ENCODE measurements at regions of chr18 and their contacts with region 1.

Region 1: DNA sequence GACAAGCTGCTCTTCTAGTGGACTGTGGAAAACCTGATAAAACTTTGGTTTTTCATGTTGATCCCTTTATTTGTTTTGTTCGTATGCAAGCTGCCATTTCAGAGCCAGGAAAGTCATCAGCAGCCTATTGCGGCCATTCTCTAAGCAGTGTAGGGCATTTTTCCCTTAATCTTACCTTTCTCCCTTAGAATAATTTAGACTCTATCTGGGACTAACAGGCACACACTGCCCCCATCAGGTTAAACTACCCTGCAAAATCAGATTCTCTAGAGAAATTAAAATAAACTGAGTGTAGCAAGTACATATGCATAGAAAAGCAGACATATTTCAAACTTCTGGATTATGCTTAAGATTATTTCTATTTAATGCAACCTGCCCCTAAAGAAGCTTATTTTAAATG is 347.5 kb downstream of the METTL4 start:
- DNase-seq: peak; percentile 50
- H3K4me3 ChIP-seq: peak overlapping the region; percentile 35 to 50 (median 48)
- H3K27ac ChIP-seq: no peak overlapping the region
- H3K4me1 ChIP-seq: peaks cover 5% of the 10 kb centered on the region
- H3K27me3 ChIP-seq: no peaks in the 10 kb centered on the region
- CTCF ChIP-seq: peak; percentile 67 to 71

Region 2: DNA sequence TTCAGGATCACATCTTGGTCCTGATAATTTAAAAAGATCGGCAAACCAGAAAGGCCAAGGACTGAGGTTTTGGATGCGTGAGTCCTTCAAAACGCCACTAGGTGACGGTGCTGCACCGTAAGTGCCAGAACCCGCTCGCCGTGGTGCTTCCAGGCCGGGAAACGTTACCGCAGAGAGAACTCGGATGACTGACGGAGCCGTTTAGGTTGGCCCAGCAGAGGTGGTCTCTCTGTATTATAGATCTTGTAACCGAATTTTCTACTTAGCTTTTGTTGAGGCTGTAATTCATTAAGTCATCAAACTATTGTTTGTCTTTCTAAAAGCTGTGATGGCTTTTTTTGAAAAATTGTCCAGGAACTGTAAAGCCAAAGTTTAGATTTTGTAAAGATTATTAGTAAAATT is 1359.0 kb before region 1 on chr18:
- CTCF ChIA-PET with region 1: no interaction called
- dilution Hi-C with region 1: no loop called
- in situ Hi-C with region 1: loop called in 1 of 2 experiments (anchors 25 kb)
- intact Hi-C with region 1: no loop called
- DNase-seq: peak; percentile 43
- H3K4me3 ChIP-seq: no peak overlapping the region
- H3K27ac ChIP-seq: no peak overlapping the region
- H3K4me1 ChIP-seq: peaks cover 12% of the 10 kb centered on the region
- H3K27me3 ChIP-seq: peaks cover 3% of the 10 kb centered on the region
- CTCF ChIP-seq: peak; percentile 98 to 100

Region 3: DNA sequence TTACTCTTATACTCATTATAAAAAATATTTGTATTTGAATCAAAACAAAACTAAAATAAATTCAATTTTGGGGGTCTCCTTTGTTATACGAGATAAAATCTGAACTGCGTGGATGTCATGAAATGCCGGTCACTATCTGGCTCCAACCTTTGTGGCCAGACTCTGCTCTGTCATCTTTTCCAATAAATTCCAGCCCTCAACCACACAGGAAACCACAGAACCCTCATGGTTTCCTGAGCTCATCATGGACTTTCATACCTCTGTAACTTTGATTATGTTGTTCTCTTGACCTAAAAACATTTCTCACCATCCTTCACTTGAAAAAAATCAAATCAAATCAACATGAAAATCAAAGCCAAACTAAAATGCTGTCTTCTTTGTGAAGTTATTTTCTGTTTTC is 377.2 kb before region 1 on chr18:
- CTCF ChIA-PET with region 1: no interaction called
- dilution Hi-C with region 1: no loop called
- in situ Hi-C with region 1: no loop called
- intact Hi-C with region 1: loop called (anchors 10 kb)
- DNase-seq: peak; percentile 64
- H3K4me3 ChIP-seq: no peak overlapping the region
- H3K27ac ChIP-seq: no peak overlapping the region
- H3K4me1 ChIP-seq: peaks cover 3% of the 10 kb centered on the region
- H3K27me3 ChIP-seq: no peaks in the 10 kb centered on the region
- CTCF ChIP-seq: no peak

Region 4: DNA sequence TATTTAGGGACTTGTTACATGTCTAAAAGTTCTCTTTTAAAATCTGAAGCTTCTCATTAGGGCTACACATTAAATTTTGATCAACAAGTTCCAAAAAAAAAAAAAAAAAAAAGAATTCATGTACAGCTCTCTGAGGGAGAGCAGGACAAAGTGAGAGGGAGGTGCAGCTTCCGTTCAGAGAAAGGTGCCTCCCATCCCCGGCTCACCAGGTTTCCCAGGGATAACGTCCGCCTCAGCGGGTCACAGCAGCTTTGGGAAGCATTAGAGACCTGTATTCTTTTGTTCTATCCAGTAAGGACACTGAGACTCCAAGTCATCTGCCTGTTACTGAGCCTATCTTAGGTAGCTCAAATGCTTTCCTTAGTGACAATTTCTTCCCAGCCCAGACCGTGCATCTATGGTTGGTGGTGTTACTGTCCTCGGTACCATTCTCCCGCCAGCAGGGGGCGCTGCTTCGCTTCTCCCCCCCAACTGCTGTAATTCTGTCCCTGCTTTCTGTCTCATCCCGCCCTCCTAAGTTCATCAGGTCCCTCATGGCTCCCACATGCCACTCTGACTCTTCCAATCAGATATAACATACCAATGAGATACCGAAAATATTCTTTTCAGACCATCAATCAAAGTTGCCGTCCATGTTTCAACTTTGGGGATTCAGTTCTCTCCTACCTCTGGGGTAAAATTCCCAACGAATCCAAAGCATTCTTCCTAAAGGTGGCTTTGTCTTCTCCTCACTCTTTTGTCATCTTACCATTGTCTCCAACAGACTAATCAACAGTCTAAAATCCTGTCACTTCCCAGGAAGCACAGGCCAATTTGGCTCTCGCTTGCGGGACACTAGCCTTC is 119.0 kb before region 1 on chr18:
- CTCF ChIA-PET with region 1: interaction called, 16 read pairs
- dilution Hi-C with region 1: no loop called
- in situ Hi-C with region 1: loop called (anchors 10 to 25 kb)
- intact Hi-C with region 1: loop called (anchors 1 kb)
- DNase-seq: peak; percentile 29
- H3K4me3 ChIP-seq: no peak overlapping the region
- H3K27ac ChIP-seq: no peak overlapping the region
- H3K4me1 ChIP-seq: no peaks in the 10 kb centered on the region
- H3K27me3 ChIP-seq: no peaks in the 10 kb centered on the region
- CTCF ChIP-seq: peak; percentile 83 to 90

Region 5: GRCh38 chr18:2312440-2312839 is 88.6 kb after region 1 on chr18:
- CTCF ChIA-PET with region 1: no interaction called
- dilution Hi-C with region 1: no loop called
- in situ Hi-C with region 1: no loop called
- intact Hi-C with region 1: no loop called
- DNase-seq: no peak
- H3K4me3 ChIP-seq: no peak overlapping the region
- H3K27ac ChIP-seq: no peak overlapping the region
- H3K4me1 ChIP-seq: no peaks in the 10 kb centered on the region
- H3K27me3 ChIP-seq: no peaks in the 10 kb centered on the region
- CTCF ChIP-seq: no peak

Region 6: DNA sequence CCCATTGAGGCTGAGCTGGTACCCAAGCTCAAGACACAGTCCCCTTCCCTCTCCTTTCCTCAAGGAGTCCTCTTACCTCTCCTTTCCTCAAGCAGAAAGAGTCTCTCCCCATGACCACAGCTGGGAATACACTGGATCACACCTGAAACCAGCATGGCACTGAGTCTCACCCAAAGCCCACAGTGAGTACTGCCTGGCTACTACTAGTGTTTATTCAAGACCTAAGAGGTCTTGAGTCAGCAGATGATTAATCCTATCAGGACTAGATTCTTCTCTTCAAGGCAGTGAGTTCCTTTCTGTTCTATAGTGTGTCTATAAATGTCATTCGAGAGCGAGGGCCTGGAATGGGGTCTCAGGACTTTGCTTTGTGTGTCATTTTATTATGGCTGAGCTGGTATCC is 236.0 kb after region 1 on chr18:
- CTCF ChIA-PET with region 1: no interaction called
- dilution Hi-C with region 1: no loop called
- in situ Hi-C with region 1: no loop called
- intact Hi-C with region 1: loop called (anchors 10 kb)
- DNase-seq: peak; percentile 76
- H3K4me3 ChIP-seq: no peak overlapping the region
- H3K27ac ChIP-seq: no peak overlapping the region
- H3K4me1 ChIP-seq: no peaks in the 10 kb centered on the region
- H3K27me3 ChIP-seq: no peaks in the 10 kb centered on the region
- CTCF ChIP-seq: no peak

Region 7: DNA sequence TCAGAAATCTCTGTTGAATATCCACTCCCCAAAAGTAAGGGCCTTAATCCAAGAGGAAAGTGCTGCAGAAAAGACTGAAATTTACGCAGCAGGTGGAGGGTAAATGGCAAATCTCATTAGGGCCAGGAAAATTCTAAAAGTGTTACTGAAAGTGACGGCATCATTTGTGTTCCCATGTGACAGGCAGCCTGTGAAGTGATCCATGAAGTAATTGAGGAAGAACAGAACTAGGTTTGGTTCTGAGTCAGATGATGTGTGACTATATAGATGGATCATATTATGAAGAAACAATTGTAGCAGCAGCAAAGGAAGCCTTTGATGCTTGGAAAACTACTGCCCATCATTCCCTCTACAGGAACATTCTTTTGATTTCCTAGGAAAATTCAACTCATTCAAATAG is 1627.3 kb after region 1 on chr18:
- CTCF ChIA-PET with region 1: no interaction called
- dilution Hi-C with region 1: no loop called
- in situ Hi-C with region 1: no loop called
- intact Hi-C with region 1: no loop called
- DNase-seq: no peak
- H3K4me3 ChIP-seq: no peak overlapping the region
- H3K27ac ChIP-seq: no peak overlapping the region
- H3K4me1 ChIP-seq: no peaks in the 10 kb centered on the region
- H3K27me3 ChIP-seq: no peaks in the 10 kb centered on the region
- CTCF ChIP-seq: no peak

Measured in mammary epithelial cell (primary cell).